GM10248 (cell line): ENCODE measurements at regions of chr11 and their contacts with region 1.

Region 1: GRCh38 chr11:83007909-83008580 is 63.7 kb downstream of the RAB30 start:
- DNase-seq: peak; percentile 30
- CTCF ChIP-seq: peak; percentile 8

Region 2: DNA sequence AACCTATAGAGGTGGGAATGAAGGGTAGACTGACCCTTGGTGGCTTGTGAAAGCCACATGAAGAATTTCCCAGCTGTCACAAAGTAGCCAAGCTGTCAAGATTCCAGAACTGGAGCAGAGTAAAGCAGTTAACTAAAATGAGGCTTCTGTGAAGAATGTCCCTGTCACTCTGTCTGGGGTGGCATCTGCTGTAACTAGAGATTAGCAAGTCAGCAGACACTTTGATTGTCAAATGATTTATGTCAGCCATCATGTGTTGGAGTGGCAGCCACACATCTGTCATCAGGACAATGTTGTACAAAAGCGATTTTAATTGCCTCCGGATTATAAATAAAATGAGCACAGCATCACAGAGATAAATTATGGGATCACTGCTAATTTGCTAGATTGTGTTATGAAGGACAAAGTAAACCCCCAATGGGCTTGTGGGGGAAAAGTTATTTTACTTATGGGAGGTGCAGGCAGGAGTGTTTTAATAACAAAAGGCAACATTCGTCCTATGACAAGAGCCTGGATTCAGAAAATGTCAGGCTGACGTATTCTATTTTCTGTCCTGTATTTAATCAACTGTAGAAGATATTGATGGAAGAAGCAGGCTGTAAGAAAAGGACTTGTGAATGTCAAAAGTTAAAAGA is 545.3 kb before region 1 on chr11:
- CTCF ChIA-PET with region 1: no interaction called
- POLR2A ChIA-PET with region 1: no interaction called
- DNase-seq: no peak
- CTCF ChIP-seq: no peak

Region 3: DNA sequence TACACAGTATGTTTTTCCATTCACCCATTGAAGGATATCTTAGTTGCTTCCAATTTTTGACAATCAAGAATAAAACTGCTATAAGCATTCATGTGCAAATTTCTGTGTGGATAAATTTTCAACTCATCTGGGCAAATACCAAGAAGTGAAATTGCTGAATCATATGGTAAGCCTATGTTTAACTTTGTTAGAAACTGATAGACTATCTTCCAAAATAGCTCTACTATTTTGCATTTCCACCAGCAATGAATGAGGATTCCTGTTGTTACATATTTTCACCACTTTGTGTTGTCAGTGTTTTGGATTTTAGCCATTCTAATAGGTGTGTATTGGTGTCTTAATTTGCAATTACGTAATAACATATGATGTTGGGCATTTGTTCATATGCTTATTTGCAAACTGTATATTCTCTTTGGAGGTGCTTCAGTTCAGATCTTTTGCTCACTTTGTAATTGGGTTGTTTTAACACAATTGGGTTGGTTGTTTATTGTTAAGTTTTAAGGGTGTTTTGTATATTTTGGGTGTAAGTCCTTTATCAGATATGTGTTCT is 225.1 kb before region 1 on chr11:
- CTCF ChIA-PET with region 1: no interaction called
- POLR2A ChIA-PET with region 1: no interaction called
- DNase-seq: no peak
- CTCF ChIP-seq: no peak

Region 4: DNA sequence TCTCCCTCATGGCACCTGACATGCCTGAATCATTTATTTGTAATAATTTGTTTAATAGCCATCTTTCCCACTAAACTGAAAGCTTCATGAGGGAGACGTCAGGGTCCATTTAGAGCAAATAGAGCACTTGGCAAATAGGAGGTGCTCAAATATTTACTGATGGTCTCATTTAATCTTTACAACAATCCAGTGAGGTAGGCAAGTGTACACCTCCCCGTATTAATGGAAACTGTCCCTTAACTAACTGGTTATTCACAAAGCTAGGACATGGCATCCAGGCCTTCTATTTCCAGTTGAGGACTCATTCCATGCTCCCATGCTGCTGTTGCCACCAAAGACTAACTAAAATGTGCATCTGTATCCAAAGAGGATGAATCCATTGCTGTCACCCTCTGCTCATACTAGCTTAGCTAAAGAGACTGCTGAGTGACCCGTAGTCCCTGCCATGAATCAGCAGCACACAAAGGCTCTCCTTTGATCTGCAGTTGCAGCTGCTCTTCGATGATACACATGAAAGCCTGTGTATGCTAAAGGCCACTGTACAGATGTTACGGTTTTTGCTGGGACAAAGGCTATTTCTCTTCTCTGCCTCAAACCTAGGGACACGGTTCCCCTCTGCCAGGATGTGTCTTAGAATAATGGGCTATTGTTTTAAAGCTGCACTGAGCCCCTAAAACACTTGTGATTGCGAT is 19.0 kb before region 1 on chr11:
- CTCF ChIA-PET with region 1: interaction called, 10 read pairs
- POLR2A ChIA-PET with region 1: no interaction called
- DNase-seq: no peak
- CTCF ChIP-seq: no peak